HEK293 (cell line): ENCODE measurements at regions of chr3 and their contacts with region 1.

Region 1: DNA sequence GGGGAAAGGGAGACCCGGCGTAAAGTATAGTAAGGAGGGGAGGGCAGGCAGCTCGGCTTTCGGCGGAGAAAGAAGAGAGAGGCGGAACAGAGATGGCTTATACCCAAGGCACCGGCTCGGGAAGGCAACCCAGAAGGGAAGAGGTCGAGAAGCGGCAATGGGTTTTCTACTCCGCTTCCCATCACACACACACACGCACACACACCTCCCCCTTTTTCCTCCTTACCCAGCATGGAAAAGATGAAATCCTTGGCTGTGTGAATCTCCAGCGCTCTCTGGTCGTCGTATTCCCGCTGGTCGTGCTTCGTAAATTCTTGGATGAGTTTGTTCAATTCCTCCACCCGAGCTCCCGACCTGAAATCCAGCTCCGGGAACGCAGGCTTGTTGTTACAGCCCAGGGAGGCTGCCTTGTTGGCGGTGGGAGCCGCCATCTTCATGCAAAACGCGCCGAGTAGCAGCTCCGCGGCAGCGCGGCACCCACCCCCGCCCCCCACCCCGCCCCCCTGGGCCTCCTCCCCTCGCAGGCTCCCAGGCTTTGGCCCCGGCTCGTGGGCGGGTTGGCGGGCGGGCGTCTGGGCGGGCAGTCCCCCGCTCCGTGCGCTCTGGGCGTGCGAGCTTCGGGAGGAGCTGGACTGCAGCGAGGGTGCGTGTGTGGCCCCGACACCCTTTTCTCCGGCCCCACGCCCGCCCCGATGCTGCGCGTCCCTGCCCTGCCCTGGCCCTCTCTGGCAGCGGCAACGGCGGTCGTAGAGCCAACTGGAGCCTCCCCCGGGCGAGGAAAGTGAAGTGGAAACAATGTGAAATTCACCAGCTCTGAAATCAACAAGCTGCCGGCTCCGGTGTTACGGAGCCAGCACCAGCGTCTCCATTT is at the start of gene MB21D2:
- H3K4me3 ChIP-seq: peak within 1 kb of the TSS; percentile 84
- H3K27ac ChIP-seq: peak within 1 kb of the TSS; percentile 96
- H3K4me1 ChIP-seq: 0 out of 2 replicates have a peak, but pooled peaks cover 4% of the 10 kb centered on the region
- CTCF ChIP-seq: no peak

Region 2: DNA sequence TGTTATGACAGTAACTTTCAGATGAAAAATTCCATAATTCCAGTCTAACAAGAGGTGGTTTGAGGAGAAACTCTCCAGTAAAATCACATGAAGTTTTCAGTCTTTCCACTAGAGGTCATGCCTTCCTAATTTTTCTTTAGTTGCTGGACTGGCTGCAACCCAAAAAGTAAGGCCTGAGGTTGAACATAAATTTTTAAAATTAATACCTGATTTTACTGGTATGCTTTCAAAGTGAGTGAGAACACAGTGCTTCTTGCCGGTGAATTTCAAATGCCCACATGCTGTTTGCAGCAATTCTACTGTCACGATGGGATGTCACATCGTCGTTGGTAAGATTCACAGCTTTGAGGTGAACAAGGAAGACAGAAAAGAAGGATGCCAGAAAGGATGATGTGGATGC is 101.3 kb before region 1 on chr3:
- CTCF ChIA-PET with region 1: interaction called, 73 read pairs
- POLR2A ChIA-PET with region 1: interaction called, 6 read pairs
- H3K4me3 ChIP-seq: no peak overlapping the region
- H3K27ac ChIP-seq: no peak overlapping the region
- H3K4me1 ChIP-seq: peaks cover 16% of the 10 kb centered on the region
- CTCF ChIP-seq: no peak

Region 3: GRCh38 chr3:192879336-192880106 is 38.1 kb before region 1 on chr3:
- CTCF ChIA-PET with region 1: interaction called, 5 read pairs
- POLR2A ChIA-PET with region 1: interaction called, 20 read pairs
- H3K4me3 ChIP-seq: peak overlapping the region; percentile 18
- H3K27ac ChIP-seq: peak overlapping the region; percentile 25; the same call in 1 of the 2 replicates
- H3K4me1 ChIP-seq: peaks cover 8% of the 10 kb centered on the region
- CTCF ChIP-seq: no peak

Region 4: GRCh38 chr3:192887701-192888100 is 29.9 kb before region 1 on chr3:
- CTCF ChIA-PET with region 1: interaction called, 10 read pairs
- POLR2A ChIA-PET with region 1: interaction called, 5 read pairs
- H3K4me3 ChIP-seq: no peak overlapping the region
- H3K27ac ChIP-seq: no peak overlapping the region
- H3K4me1 ChIP-seq: peaks cover 13% of the 10 kb centered on the region
- CTCF ChIP-seq: no peak

Region 5: GRCh38 chr3:193068365-193068764 is 150.7 kb after region 1 on chr3:
- CTCF ChIA-PET with region 1: no interaction called
- POLR2A ChIA-PET with region 1: no interaction called
- H3K4me3 ChIP-seq: no peak overlapping the region
- H3K27ac ChIP-seq: no peak overlapping the region
- H3K4me1 ChIP-seq: no peaks in the 10 kb centered on the region
- CTCF ChIP-seq: no peak

Region 6: DNA sequence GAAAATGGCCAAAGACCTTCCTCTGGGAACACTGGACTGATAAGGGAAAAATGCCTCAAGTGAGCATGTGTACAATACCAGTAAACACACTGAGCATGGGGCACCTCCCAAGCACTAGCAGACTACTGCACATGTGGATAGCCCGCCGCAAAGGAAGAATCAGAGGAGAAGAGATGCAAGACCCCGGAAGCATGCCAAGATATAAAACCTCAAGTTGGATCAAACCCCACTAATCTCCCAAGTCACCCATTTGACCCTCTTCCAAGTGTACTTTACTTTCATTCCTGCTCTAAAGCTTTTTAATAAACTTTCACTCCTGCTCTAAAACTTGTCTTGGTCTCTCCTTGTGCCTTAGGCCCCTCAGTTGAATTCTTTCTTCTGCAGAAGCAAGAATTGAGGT is 202.3 kb after region 1 on chr3:
- CTCF ChIA-PET with region 1: no interaction called
- POLR2A ChIA-PET with region 1: no interaction called
- H3K4me3 ChIP-seq: no peak overlapping the region
- H3K27ac ChIP-seq: no peak overlapping the region
- H3K4me1 ChIP-seq: no peaks in the 10 kb centered on the region
- CTCF ChIP-seq: no peak